Activated CD4-positive, alpha-beta T cell treated with anti-CD3 and anti-CD28 coated beads, Interleukin-2, amount 10 ng/mL, durations not matched to agents 7 days and 5 days (primary cell): ENCODE measurements at regions of chr1 and their contacts with region 1.

Region 1: DNA sequence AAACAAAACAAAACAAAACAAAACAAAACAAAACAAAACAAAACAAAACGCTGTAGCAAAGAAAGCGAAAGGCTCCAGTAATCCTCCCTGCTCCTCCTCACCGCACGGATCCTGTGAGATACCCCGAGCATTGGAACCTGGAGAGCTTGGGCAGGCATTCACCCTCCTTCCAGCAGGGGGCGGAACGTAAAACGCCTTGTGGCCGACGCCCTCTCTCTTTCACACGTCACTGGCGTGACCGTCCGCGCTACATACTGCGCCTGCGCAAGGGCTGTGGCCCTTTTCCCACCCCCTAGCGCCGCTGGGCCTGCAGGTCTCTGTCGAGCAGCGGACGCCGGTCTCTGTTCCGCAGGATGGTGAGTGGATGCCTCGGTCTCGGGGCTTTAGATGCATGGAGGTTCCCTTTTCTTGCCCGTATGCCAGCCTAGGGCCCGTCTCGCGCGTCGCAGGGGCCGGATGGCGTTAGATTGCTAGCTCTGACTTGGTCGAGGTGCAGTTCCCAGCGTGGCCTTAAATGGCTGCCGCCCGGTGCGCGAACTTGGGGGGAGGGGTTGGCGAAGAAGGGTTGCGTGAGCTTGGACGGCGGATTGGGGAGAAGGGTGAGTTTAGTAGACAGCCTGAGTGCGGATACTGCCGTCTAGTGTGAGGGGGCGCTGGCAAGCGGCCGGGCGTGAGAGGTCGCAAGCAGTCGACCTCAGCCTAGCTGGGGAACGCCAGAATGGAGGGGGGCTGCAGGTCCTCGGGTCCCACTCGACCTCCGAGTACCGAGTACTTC is at the start of gene RPL5:
- DNase-seq: peak; percentile 98
- H3K4me3 Mint-ChIP-seq: peak within 1 kb of the TSS; percentile 99
- H3K27ac Mint-ChIP-seq: peak within 1 kb of the TSS; percentile 97
- H3K4me1 Mint-ChIP-seq: peaks cover 45% of the 10 kb centered on the region
- H3K27me3 Mint-ChIP-seq: no peaks in the 10 kb centered on the region
- total RNA-seq, gene RPL5: 721 to 748 TPM

Region 2: DNA sequence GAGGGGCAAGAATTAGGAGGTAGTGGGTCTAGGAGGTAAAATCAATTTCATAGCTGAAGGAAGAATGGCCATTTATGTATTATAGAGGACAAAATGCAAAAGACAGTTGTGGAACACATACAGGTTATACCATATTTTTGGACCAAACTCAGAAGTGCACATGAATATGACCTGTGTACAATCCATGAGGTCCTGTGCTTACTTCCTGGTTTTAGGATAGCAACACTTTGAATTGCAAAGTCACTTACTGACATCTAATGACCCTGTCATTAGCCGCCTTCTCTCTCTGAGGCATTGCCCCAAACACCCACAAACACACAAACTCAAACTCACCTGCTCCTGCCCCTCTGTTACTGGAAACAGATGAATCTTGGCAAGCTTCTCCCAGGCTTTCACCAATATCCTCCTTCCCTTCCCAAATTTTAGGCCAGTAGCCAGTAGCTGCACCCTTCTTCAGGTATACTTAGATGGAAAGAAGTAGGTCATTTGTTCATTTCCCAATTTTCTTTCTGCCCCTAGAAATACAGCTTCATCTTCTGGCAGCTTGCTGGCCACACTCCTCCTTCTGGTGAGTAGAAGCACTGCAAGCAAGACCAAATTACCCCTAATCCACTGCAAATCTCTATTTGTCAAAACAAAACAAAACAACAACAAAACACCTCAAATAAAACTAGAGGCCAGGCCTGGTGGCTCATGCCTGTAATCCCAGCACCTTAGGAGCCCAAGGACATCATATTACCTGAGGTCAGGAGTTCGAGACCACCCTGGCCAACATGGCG is 13.8 kb before region 1 on chr1:
- CTCF ChIA-PET with region 1: interaction called, 15 read pairs
- POLR2A ChIA-PET with region 1: no interaction called
- DNase-seq: peak; percentile 30
- H3K4me3 Mint-ChIP-seq: no peak overlapping the region
- H3K27ac Mint-ChIP-seq: no peak overlapping the region
- H3K4me1 Mint-ChIP-seq: no peaks in the 10 kb centered on the region
- H3K27me3 Mint-ChIP-seq: peaks cover 42% of the 10 kb centered on the region